Heart right ventricle (tissue), 16 donors: ENCODE measurements at regions of chr1 and their contacts with region 1.

Region 1: DNA sequence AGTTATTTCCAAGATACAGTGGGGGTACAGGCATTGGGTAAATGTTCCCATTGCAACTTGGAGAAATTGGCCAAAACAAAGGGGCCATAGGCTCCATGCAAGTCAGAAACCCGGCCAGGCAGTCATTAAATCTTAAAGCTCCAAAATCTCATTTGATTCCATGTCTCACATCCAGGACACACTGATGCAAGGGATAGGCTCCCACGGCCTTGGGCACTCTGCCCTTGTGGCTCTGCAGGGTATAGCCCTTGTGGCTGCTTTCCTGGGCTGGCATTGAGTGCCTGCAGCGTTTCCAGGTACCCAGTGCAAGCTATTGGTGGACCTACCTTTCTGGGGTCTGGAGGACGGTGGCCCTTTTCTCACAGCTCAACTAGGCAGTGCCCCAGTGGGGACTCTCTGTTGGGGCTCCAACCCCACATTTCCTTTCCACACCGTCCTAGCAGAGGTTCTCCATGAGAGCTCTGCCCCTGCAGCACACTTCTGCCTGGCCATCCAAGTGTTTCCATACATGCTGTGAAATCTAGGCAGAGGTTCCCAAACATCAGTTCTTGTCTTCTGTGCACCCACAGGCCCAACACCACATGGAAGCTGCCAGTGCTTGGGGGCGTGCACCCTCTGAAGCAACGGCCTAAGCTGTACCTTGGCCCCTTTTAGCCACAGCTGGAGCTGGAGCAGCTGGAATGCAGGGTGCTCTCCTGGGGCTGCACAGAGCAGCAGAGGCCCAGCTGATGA is 67.2 kb downstream of the HS2ST1 start:
- DNase-seq: no peak
- ATAC-seq: peak in 1 of 8 donors; percentile 47
- H3K4me3 ChIP-seq: no peak overlapping the region
- H3K27ac ChIP-seq: no peak overlapping the region
- H3K4me1 ChIP-seq: no peaks in the 10 kb centered on the region
- H3K27me3 ChIP-seq: no peaks in the 10 kb centered on the region
- CTCF ChIP-seq: no peak

Region 2: DNA sequence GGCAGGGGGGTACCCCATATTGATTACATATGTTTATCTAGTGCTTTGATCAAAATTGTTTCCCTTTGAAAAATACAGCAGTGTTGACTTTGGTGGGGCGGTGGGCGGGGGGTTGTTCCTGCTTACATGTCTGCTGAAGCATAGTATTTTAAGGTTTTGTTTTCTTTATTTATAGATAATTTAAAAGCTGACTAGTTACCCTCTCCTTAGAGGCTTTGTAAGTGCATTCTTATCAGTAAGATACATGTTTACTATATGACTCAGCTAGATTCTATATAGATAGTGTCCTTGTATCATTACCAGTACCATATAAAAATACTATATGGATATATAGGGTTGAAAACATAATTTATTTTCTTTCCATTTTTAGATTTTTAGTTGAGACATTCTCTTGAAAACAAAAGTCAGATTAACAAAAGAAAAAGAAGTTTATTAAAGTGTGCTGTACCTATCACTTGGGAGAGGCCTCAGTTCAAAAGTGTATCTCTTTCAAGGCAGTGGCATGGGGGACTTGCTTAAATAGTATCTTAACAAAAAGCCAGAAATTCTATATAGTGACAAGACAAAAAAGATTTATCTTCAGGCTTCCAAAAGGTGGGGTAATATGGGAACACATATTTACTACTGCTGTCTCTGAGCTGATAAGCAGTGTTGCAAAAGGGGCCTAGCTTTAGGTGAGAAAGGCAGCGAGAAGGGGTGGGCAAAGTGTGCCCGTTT is 11.8 kb after region 1 on chr1:
- intact Hi-C with region 1: loop called in 1 of 10 experiments (anchors 1 kb)
- DNase-seq: no peak
- ATAC-seq: no peak
- H3K4me3 ChIP-seq: no peak overlapping the region
- H3K27ac ChIP-seq: no peak overlapping the region
- H3K4me1 ChIP-seq: peaks cover 0 to 4% (median 0%) of the 10 kb centered on the region in 9 donors
- H3K27me3 ChIP-seq: no peaks in the 10 kb centered on the region
- CTCF ChIP-seq: no peak

Region 3: GRCh38 chr1:87045761-87046304 is 64.2 kb after region 1 on chr1:
- intact Hi-C with region 1: no loop called
- DNase-seq: no peak
- ATAC-seq: no peak
- H3K4me3 ChIP-seq: no peak overlapping the region
- H3K27ac ChIP-seq: no peak overlapping the region
- H3K4me1 ChIP-seq: peaks cover 0 to 6% (median 0%) of the 10 kb centered on the region in 9 donors
- H3K27me3 ChIP-seq: no peaks in the 10 kb centered on the region
- CTCF ChIP-seq: no peak